MCF 10A (cell line): ENCODE measurements at regions of chr6 and their contacts with region 1.

Region 1: DNA sequence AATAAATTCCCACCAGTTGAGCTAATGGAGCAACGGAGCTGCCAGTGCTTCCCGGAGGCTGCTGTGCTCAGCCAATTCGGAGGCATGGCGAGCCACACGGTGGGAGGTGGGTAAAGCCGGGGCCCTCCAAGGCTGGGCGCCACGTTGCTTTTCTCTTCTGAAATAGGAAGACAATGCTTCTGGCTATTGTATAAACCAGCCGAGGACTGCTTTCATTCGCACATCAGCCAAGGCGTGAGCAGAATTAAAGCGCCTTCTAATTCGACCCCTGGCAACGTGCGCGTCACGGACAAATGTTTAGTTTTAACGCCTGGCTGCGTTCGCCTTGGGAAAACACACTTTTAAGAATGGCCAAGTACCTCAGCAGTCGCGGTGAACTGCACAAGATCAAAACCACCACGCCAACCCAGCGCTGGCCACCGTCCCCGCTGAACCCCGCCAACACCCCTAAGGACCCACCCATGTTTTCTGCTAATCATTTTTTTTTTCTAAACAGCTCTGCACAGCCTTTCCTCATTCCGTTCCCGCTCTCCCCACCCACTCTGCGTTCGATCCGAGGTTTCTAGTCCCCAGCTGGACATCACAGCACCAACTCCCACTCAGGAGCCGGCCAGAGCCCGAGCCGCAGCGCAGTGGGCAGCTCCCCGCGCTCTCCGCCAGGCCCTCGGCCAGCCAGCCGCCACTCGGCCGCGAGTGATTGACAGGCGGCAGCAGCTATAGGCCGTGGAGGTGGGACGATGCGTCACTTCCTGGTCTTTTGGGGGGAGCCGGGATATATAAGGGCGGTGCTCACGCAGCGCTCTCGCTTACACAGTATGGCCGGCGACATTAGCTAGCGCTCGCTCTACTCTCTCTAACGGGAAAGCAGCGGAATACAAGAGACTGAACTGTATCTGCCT is at the start of gene AMD1:
- DNase-seq: peak; percentile 97
- H3K4me3 Mint-ChIP-seq: peak within 1 kb of the TSS; percentile 96
- H3K27ac Mint-ChIP-seq: peak within 1 kb of the TSS; percentile 97
- H3K4me1 Mint-ChIP-seq: peaks cover 14% of the 10 kb centered on the region
- H3K27me3 Mint-ChIP-seq: no peaks in the 10 kb centered on the region
- CTCF ChIP-seq: no peak
- total RNA-seq, gene AMD1: 77.8 and 121 TPM in 2 replicates

Region 2: GRCh38 chr6:110662490-110663211 is 211.6 kb before region 1 on chr6:
- CTCF ChIA-PET with region 1: no interaction called
- POLR2A ChIA-PET with region 1: interaction called, 13 read pairs
- intact Hi-C with region 1: no loop called
- DNase-seq: peak; percentile 13
- H3K4me3 Mint-ChIP-seq: no peak overlapping the region
- H3K27ac Mint-ChIP-seq: peak overlapping the region; percentile 1
- H3K4me1 Mint-ChIP-seq: peaks cover 29% of the 10 kb centered on the region
- H3K27me3 Mint-ChIP-seq: no peaks in the 10 kb centered on the region
- CTCF ChIP-seq: no peak

Region 3: DNA sequence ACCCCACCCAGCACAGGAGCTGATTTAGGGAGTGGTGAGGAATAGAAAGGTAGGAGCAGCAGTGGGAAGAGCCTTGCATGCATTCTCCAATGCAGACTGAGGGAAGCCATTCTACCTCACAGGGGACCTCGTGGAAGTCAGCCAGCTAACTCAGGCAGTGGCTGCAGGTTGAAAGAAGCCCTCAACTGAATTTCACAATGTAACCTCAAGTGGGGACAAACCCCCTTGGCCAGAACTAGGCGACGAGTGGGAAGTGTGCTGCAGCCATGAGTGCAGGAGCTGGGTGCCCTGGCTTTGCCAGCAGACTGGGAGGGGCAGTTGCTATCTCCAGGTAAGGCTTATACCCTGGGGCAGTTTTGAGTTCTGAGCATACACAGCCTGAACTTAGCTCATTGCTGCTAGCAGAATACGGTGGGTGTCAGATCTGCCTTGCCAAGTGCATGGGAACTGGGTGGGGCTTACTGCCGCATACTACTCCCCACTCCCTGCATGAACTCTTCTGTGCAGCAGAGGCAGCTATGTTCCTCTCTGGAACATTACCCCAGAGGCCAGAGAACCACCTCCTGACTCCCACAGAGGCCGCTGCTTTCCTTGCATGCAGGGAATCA is 185.5 kb before region 1 on chr6:
- CTCF ChIA-PET with region 1: interaction called, 53 read pairs
- POLR2A ChIA-PET with region 1: interaction called, 28 read pairs
- intact Hi-C with region 1: no loop called
- DNase-seq: peak; percentile 45
- H3K4me3 Mint-ChIP-seq: no peak overlapping the region
- H3K27ac Mint-ChIP-seq: no peak overlapping the region
- H3K4me1 Mint-ChIP-seq: peaks cover 16% of the 10 kb centered on the region
- H3K27me3 Mint-ChIP-seq: no peaks in the 10 kb centered on the region
- CTCF ChIP-seq: no peak

Region 4: GRCh38 chr6:110815217-110816109 is 58.8 kb before region 1 on chr6 and contains the start of gene CDK19:
- CTCF ChIA-PET with region 1: interaction called, 57 read pairs
- POLR2A ChIA-PET with region 1: interaction called, 613 read pairs
- intact Hi-C with region 1: loop called (anchors 1 kb)
- DNase-seq: peak; percentile 100
- H3K4me3 Mint-ChIP-seq: peak within 1 kb of the TSS; percentile 98
- H3K27ac Mint-ChIP-seq: peak within 1 kb of the TSS; percentile 95
- H3K4me1 Mint-ChIP-seq: peaks cover 8% of the 10 kb centered on the region
- H3K27me3 Mint-ChIP-seq: no peaks in the 10 kb centered on the region
- CTCF ChIP-seq: no peak
- total RNA-seq, gene CDK19: 10.2 and 16.8 TPM in 2 replicates

Region 5: GRCh38 chr6:110890288-110890687 is 16.1 kb after region 1 on chr6:
- CTCF ChIA-PET with region 1: interaction called, 5 read pairs
- POLR2A ChIA-PET with region 1: interaction called, 26 read pairs
- intact Hi-C with region 1: no loop called
- DNase-seq: no peak
- H3K4me3 Mint-ChIP-seq: no peak overlapping the region
- H3K27ac Mint-ChIP-seq: no peak overlapping the region
- H3K4me1 Mint-ChIP-seq: peaks cover 6% of the 10 kb centered on the region
- H3K27me3 Mint-ChIP-seq: no peaks in the 10 kb centered on the region
- CTCF ChIP-seq: no peak

Region 6: GRCh38 chr6:110949679-110950285 is 75.6 kb after region 1 on chr6:
- CTCF ChIA-PET with region 1: interaction called, 32 read pairs
- POLR2A ChIA-PET with region 1: interaction called, 31 read pairs
- intact Hi-C with region 1: loop called (anchors 1 kb)
- DNase-seq: peak; percentile 33
- H3K4me3 Mint-ChIP-seq: no peak overlapping the region
- H3K27ac Mint-ChIP-seq: no peak overlapping the region
- H3K4me1 Mint-ChIP-seq: peaks cover 16% of the 10 kb centered on the region
- H3K27me3 Mint-ChIP-seq: no peaks in the 10 kb centered on the region
- CTCF ChIP-seq: peak; percentile 46

Region 7: DNA sequence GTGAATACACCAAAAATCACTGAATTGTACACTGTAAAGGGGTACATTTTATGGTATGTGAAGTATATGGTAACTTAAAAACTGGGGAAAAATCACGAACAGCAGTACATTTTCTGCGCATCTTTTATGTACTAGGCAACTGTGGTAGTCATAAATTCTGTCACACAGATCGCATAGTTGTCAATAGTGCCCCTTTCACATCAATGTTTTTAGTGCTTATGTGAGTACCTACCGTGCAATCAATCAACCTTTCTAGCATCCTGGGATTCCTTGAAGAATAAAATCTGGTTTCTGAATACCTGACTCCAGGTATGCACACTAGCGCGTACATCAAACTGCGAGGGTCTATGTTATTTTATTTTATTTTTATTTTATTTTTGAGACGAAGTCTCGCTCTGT is 107.0 kb after region 1 on chr6:
- CTCF ChIA-PET with region 1: no interaction called
- POLR2A ChIA-PET with region 1: interaction called, 45 read pairs
- intact Hi-C with region 1: no loop called
- DNase-seq: no peak
- H3K4me3 Mint-ChIP-seq: peak overlapping the region; percentile 99
- H3K27ac Mint-ChIP-seq: peak overlapping the region; percentile 100
- H3K4me1 Mint-ChIP-seq: peaks cover 16% of the 10 kb centered on the region
- H3K27me3 Mint-ChIP-seq: no peaks in the 10 kb centered on the region
- CTCF ChIP-seq: no peak